T-cell (primary cell): ENCODE measurements at regions of chr9 and their contacts with region 1.

Region 1: DNA sequence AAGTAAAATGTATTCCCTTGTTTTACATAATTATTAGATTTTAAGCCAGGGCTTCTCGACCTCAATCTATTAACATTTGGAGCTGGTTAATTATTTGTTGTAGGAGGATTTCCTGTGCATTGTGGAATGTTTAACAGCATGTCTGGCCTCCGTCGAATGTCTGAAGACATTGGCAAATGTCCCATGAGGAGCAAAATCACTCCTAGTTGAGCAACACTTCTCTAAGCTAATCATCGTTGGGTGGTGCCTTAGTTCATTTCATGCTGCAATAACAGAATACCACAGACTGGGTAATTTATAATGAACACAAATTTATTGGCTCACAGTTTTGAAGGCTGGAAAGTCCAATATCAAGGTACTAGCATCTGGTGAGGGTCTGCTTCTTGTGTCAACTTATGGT is 13.4 kb upstream of the VPS13A start:
- DNase-seq: no peak
- ATAC-seq: no peak
- H3K4me3 ChIP-seq: no peak overlapping the region
- H3K4me3 Mint-ChIP-seq: no peak overlapping the region
- H3K27ac ChIP-seq: no peak overlapping the region
- H3K27ac Mint-ChIP-seq: no peak overlapping the region
- H3K4me1 ChIP-seq: no peaks in the 10 kb centered on the region
- H3K4me1 Mint-ChIP-seq: peaks cover 0 to 2% (median 0%) of the 10 kb centered on the region in 3 donors
- H3K27me3 ChIP-seq: peaks cover 0 to 2% of the 10 kb centered on the region in 2 experiments
- H3K27me3 Mint-ChIP-seq: peaks cover 6 to 8% of the 10 kb centered on the region in 2 donors

Region 2: GRCh38 chr9:77111408-77111807 is 52.5 kb before region 1 on chr9:
- CTCF ChIA-PET with region 1: no interaction called
- POLR2A ChIA-PET with region 1: no interaction called
- DNase-seq: no peak
- ATAC-seq: no peak
- H3K4me3 ChIP-seq: no peak overlapping the region
- H3K4me3 Mint-ChIP-seq: no peak overlapping the region
- H3K27ac ChIP-seq: no peak overlapping the region
- H3K27ac Mint-ChIP-seq: no peak overlapping the region
- H3K4me1 ChIP-seq: no peaks in the 10 kb centered on the region
- H3K4me1 Mint-ChIP-seq: no peaks in the 10 kb centered on the region
- H3K27me3 ChIP-seq: no peaks in the 10 kb centered on the region
- H3K27me3 Mint-ChIP-seq: peaks cover 11 to 17% of the 10 kb centered on the region in 2 donors

Region 3: DNA sequence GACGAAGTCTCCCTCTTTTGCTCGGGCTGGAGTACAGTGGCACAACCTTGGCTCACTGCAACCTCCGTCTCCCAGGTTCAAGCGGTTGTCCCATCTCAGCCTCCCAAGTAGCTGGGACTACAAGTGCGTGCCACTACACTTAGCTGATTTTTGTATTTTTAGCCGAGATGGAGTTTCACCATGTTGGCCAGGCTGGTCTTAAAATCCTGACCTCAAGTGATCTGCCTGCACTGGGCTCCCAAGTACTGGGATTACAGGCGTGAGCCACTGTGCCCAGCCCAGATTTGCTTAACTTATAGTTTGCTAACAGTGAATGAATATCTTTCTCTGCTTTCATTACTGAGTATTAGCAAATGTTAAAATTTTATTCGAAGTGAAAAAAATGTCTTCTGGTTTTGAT is 97.7 kb after region 1 on chr9:
- CTCF ChIA-PET with region 1: interaction called in 1 of 2 experiments, 11 read pairs
- POLR2A ChIA-PET with region 1: no interaction called
- DNase-seq: no peak
- ATAC-seq: no peak
- H3K4me3 ChIP-seq: no peak overlapping the region
- H3K4me3 Mint-ChIP-seq: no peak overlapping the region
- H3K27ac ChIP-seq: no peak overlapping the region
- H3K27ac Mint-ChIP-seq: no peak overlapping the region
- H3K4me1 ChIP-seq: no peaks in the 10 kb centered on the region
- H3K4me1 Mint-ChIP-seq: no peaks in the 10 kb centered on the region
- H3K27me3 ChIP-seq: no peaks in the 10 kb centered on the region
- H3K27me3 Mint-ChIP-seq: no peaks in the 10 kb centered on the region